ENCODE measurements at regions of chr17 and their contacts with region 1.

Region 1: DNA sequence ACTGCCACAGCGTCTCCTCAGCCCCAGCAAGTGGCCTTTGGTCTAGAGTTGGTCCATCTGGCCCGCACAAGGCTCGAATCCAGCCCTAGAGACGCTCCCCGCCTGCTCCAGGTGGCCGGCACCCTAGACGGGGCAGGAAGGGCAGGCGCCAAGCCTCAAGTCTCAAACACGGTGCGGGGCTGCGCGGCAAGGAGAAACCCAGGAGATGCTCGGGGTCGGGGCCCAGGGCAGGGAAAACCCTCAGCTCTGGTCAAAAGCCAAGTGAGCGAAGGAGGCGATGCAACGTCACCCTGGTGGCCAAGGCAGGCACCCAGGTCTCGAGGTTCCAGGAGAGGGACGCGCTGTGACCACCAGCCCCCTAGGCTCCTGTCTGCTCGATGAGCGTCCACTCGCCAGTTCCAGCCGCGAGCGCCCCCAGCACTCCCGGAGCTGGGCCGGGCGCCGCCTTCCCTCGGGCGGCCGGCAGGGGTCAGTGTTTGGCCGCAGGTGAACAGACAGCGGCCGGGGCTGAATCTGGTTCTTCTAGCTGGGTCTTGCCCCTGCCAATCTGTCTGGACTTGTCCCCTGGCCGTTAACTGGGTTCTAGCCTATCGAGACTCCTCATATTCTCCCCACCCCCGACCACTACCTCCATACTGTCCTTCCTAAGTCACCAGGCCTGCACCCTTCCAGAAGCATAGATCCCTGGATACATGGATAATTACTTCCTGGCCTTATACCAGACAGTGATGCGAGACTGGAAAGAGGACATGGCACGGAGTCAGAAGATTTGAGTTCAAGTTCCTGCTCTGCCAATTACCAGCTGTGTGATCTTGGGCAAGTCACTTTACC is 44.0 kb downstream of the PRAC1 start:
- DNase-seq: peak; percentile 74
- H3K4me3 Mint-ChIP-seq: no peak overlapping the region
- H3K27ac Mint-ChIP-seq: no peak overlapping the region
- H3K4me1 Mint-ChIP-seq: peaks cover 4% of the 10 kb centered on the region
- H3K27me3 Mint-ChIP-seq: peaks cover 20% of the 10 kb centered on the region

Region 2: GRCh38 chr17:48510761-48511604 is 167.4 kb before region 1 on chr17:
- CTCF ChIA-PET with region 1: no interaction called
- intact Hi-C with region 1: no loop called
- DNase-seq: peak; percentile 71
- H3K4me3 Mint-ChIP-seq: peak overlapping the region; percentile 22
- H3K27ac Mint-ChIP-seq: peak overlapping the region; percentile 89
- H3K4me1 Mint-ChIP-seq: peaks cover 39% of the 10 kb centered on the region
- H3K27me3 Mint-ChIP-seq: no peaks in the 10 kb centered on the region

Region 3: DNA sequence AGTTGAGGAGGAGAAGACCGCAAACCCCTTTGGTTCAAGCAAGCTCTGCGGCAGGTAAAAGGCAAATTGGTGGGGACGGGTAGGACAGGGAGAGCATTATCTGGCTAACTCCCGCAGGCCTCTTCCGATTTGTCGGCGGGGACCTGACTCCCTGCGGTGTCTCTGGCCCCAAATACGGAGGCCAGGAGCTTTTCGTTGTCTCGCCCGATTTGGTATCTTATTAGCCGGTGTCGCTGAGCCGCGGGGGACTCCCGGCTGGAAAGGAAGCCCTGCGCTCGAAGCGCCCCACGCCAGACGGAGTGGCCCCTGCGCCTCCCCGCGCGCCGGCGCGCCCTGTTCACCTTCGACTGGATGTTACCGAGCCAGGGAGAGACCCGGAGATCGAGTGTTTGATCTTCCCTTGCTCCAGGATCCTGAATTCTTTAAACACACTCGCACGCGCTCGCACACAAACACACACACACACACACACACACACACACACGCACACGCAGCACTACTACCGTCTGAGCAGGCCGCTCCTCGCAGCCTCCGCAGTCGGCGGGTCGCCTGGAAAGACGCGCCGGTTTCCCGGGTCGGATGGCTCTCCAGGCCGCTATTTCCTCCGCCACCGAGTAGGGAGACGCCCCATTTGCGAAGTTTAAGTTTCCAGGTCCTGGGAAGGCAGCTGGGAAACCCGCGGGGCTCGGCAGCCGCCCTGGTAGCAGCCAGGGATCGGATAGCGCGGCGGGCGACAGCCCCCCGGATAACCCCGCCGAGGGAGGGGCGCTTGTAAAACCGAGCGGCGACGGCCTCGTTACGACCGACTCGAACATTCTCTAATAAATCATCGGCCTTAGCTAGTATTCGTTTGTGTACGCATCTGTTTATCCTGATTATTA is 40.6 kb after region 1 on chr17:
- CTCF ChIA-PET with region 1: interaction called, 50 read pairs
- intact Hi-C with region 1: loop called (anchors 2 kb)
- DNase-seq: no peak
- H3K4me3 Mint-ChIP-seq: peak overlapping the region; percentile 47
- H3K27ac Mint-ChIP-seq: no peak overlapping the region
- H3K4me1 Mint-ChIP-seq: peaks cover 27% of the 10 kb centered on the region
- H3K27me3 Mint-ChIP-seq: peaks cover 70% of the 10 kb centered on the region

Region 4: DNA sequence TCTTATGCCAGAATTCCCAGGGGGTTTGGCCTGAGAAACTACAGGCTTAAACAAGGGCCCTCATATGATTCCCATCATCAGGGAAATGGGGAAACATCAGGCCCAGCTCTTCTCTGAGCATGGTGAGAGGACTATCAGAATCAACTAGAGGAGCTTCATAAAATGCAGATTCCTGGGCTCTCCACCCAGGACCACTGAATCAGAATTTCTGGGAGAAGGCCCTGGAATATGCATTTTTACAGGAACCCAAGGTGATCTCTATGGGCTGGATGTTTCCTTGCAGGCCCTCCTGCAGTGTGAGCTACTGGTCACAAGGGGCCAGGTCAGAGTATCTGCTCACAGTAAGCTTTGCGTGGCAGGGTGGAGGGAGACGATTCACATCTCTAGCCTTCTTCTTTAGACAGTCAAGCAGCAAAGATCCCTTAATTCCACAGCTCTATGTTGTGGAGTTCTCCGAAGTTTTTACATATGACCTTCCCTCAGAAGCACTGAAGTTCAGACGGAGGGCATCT is 89.0 kb after region 1 on chr17:
- CTCF ChIA-PET with region 1: interaction called, 10 read pairs
- intact Hi-C with region 1: no loop called
- DNase-seq: no peak
- H3K4me3 Mint-ChIP-seq: no peak overlapping the region
- H3K27ac Mint-ChIP-seq: no peak overlapping the region
- H3K4me1 Mint-ChIP-seq: no peaks in the 10 kb centered on the region
- H3K27me3 Mint-ChIP-seq: peaks cover 28% of the 10 kb centered on the region

Region 5: GRCh38 chr17:48804925-48805411 is 126.6 kb after region 1 on chr17:
- CTCF ChIA-PET with region 1: interaction called, 26 read pairs
- intact Hi-C with region 1: loop called (anchors 5 kb)
- DNase-seq: peak; percentile 78
- H3K4me3 Mint-ChIP-seq: no peak overlapping the region
- H3K27ac Mint-ChIP-seq: no peak overlapping the region
- H3K4me1 Mint-ChIP-seq: no peaks in the 10 kb centered on the region
- H3K27me3 Mint-ChIP-seq: peaks cover 5% of the 10 kb centered on the region

Region 6: GRCh38 chr17:49031965-49032928 is 353.9 kb after region 1 on chr17:
- CTCF ChIA-PET with region 1: interaction called, 13 read pairs
- intact Hi-C with region 1: loop called (anchors 1 kb)
- DNase-seq: peak; percentile 65
- H3K4me3 Mint-ChIP-seq: no peak overlapping the region
- H3K27ac Mint-ChIP-seq: no peak overlapping the region
- H3K4me1 Mint-ChIP-seq: peaks cover 4% of the 10 kb centered on the region
- H3K27me3 Mint-ChIP-seq: peaks cover 4% of the 10 kb centered on the region

Region 7: DNA sequence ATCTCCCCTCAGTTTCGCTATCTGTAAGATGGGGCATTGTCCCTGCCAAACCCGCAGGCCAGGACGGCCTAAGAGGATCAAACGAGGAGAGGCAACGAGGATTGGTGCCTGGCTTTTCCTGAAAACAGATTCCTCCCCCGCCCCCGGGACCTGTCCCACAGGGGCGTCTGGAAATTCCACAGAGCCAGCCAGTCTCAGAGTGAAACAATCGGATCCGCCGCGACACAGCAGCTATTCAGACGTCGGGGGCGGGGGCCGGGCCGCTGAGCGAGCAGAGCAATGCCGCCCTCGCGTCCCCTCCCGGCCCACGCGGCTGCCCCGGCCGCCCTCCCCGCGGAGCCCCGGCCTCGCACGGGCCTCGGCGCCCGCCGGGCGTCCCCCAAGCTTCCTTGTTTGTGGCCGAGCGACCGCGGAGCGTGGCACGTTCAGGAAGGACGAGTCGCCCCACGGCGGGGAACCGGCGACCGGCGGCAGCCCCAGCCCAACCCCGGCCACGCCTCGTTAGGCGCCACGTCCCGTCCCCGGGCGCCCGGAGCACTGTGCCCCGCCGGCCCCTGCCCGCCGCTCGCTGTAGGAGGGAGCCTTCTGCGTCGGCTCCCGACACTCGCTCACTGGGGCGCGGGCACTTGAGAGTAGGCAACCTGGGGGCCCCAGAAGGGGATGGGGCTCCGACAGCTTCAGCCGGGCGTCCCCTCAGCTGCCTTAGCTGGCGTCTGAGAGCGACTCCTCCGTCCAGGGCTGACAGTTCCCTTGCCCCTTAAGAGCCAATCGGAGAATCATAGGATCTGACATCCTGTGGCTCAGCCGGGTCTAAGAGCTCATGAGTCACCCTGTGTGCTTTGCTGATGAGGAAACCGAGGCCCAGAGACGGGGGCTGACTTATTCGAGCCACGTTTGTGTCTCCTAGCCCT is 581.9 kb after region 1 on chr17:
- CTCF ChIA-PET with region 1: no interaction called
- intact Hi-C with region 1: no loop called
- DNase-seq: peak; percentile 69
- H3K4me3 Mint-ChIP-seq: peak overlapping the region; percentile 79
- H3K27ac Mint-ChIP-seq: peak overlapping the region; percentile 46
- H3K4me1 Mint-ChIP-seq: peaks cover 13% of the 10 kb centered on the region
- H3K27me3 Mint-ChIP-seq: no peaks in the 10 kb centered on the region